ENCODE measurements at regions of chr7 and their contacts with region 1.

Region 1: GRCh38 chr7:131945313-131945911 is 389.0 kb upstream of the PODXL start:
- DNase-seq: peak; percentile 56 to 58
- ATAC-seq: peak; percentile 61 to 86
- H3K4me3 ChIP-seq: peak overlapping the region; percentile 24; the same call in 1 of the 3 replicates
- H3K27ac ChIP-seq: peak overlapping the region; percentile 76 to 92
- H3K4me1 ChIP-seq: peaks cover 45% of the 10 kb centered on the region
- CTCF ChIP-seq: peak; percentile 92
- EP300 ChIP-seq: no peak
- POLR2A ChIP-seq: no peak
- RAD21 ChIP-seq: peak; percentile 95 to 99

Region 2: DNA sequence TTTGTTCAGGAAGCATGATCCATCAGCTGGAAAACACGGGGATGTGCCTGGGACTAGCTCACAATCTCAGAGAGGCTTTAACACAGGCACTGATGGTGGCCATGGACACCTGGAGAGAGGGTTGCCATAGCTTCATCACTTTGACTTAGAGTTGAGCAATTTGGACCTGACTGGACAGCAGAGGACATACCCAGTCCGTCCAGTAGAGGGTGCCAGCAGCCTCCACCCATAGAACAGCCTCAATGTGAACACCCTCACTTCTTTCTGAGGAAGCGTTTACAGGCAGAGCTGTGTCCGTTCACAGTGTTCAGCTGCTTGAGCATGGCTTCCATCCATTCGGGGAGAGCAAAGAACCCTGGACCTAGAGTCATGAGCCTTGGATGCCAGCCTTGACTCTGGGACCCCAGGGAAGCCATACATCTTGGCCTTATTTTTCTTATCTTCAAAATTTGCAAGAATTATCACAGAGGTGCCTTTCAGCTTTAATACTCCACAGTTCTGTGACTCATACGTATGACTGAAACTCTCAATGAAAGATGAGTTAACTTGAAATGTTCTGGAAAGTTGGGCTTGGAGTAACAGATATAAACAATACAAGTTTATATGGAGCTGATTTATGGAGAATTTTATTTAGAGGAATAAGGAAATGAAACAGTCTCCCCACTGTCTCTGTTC is 86.1 kb before region 1 on chr7:
- CTCF ChIA-PET with region 1: interaction called, 54 read pairs
- POLR2A ChIA-PET with region 1: no interaction called
- DNase-seq: peak; percentile 77 to 87
- ATAC-seq: peak; percentile 86 to 97
- H3K4me3 ChIP-seq: no peak overlapping the region
- H3K27ac ChIP-seq: no peak overlapping the region
- H3K4me1 ChIP-seq: peaks cover 21% of the 10 kb centered on the region
- CTCF ChIP-seq: peak; percentile 84
- EP300 ChIP-seq: no peak
- POLR2A ChIP-seq: no peak
- RAD21 ChIP-seq: peak; percentile 81 to 85

Region 3: DNA sequence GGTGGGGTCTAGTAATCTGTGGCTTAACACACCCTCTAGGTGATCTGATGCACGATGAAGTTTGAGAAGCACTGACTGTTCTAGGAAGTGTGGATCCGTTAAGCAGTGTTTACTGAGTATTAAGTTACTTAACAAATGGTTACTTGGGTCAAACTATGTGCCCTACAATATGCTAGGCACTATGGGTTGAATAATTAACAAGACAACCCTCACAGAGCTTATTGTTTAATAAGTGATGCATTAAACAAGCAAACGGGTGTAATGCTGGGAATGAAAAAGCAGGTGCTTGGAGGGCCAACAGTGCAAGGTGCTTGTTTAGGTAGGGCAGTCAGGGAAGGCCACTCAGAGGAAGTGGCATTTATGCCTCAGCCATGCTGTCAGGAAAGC is 11.0 kb before region 1 on chr7:
- CTCF ChIA-PET with region 1: interaction called, 14 read pairs
- POLR2A ChIA-PET with region 1: no interaction called
- DNase-seq: peak in 1 of 2 experiments; percentile 56
- ATAC-seq: peak in 1 of 2 experiments; percentile 34; a peak in 1 of 6 replicates
- H3K4me3 ChIP-seq: no peak overlapping the region
- H3K27ac ChIP-seq: peak overlapping the region; percentile 25 to 50; a peak in 2 of 6 replicates
- H3K4me1 ChIP-seq: peaks cover 18% of the 10 kb centered on the region
- CTCF ChIP-seq: no peak
- EP300 ChIP-seq: no peak
- POLR2A ChIP-seq: no peak
- RAD21 ChIP-seq: no peak

Region 4: GRCh38 chr7:131974671-131975070 is 29.3 kb after region 1 on chr7:
- CTCF ChIA-PET with region 1: interaction called, 12 read pairs
- POLR2A ChIA-PET with region 1: no interaction called
- DNase-seq: no peak
- ATAC-seq: no peak
- H3K4me3 ChIP-seq: no peak overlapping the region
- H3K27ac ChIP-seq: no peak overlapping the region
- H3K4me1 ChIP-seq: no peaks in the 10 kb centered on the region
- CTCF ChIP-seq: no peak
- EP300 ChIP-seq: no peak
- POLR2A ChIP-seq: no peak
- RAD21 ChIP-seq: no peak

Region 5: GRCh38 chr7:132160611-132161532 is 215.5 kb after region 1 on chr7:
- CTCF ChIA-PET with region 1: interaction called, 52 read pairs
- POLR2A ChIA-PET with region 1: no interaction called
- DNase-seq: no peak
- ATAC-seq: no peak; a peak in 1 of 6 replicates
- H3K4me3 ChIP-seq: no peak overlapping the region
- H3K27ac ChIP-seq: no peak overlapping the region
- H3K4me1 ChIP-seq: no peaks in the 10 kb centered on the region
- CTCF ChIP-seq: no peak
- EP300 ChIP-seq: no peak
- POLR2A ChIP-seq: no peak
- RAD21 ChIP-seq: no peak

Region 6: GRCh38 chr7:132249614-132249972 is 304.2 kb after region 1 on chr7:
- CTCF ChIA-PET with region 1: interaction called, 170 read pairs
- POLR2A ChIA-PET with region 1: no interaction called
- DNase-seq: peak; percentile 56 to 59
- ATAC-seq: peak; percentile 86 to 92
- H3K4me3 ChIP-seq: no peak overlapping the region
- H3K27ac ChIP-seq: no peak overlapping the region; a peak in 1 of 6 replicates
- H3K4me1 ChIP-seq: peaks cover 24% of the 10 kb centered on the region
- CTCF ChIP-seq: peak; percentile 48
- EP300 ChIP-seq: no peak
- POLR2A ChIP-seq: no peak
- RAD21 ChIP-seq: peak; percentile 65 to 69